Dorsolateral prefrontal cortex (tissue), 120 donors: ENCODE measurements at regions of chr17 and their contacts with region 1.

Region 1: DNA sequence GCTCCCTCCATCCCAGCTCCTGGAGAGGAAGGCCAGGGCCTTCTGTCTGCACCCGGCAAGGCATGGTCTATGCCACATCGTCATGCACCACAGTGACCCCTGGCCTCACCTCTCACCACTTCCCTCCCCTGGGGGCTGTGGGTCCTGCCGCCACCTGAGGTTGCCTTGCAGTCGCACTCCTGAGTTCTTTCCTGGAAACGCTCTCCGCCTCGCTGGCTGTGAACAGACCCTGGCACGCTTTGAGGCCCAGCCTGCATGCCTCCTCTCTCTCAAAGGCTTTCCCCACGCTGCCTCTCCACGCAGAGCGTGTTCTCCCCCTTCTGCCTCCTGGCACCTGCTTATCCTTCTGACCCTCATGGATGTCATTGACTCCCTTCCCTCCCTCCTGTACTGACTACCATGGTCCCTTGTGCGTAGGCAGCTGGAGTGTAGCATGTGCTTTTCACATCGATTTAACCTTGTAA is 45.4 kb downstream of the SEC14L1 start:
- DNase-seq: peak in 3 of 10 donors; percentile 37 to 63 (median 59)
- H3K4me3 ChIP-seq: peak overlapping the region in 2 of 59 donors; percentile 1 to 10
- H3K27ac ChIP-seq: peak overlapping the region in 55 of 59 donors; percentile 1 to 83 (median 71)
- H3K27me3 ChIP-seq: no peaks in the 10 kb centered on the region
- CTCF ChIP-seq: no peak

Region 2: DNA sequence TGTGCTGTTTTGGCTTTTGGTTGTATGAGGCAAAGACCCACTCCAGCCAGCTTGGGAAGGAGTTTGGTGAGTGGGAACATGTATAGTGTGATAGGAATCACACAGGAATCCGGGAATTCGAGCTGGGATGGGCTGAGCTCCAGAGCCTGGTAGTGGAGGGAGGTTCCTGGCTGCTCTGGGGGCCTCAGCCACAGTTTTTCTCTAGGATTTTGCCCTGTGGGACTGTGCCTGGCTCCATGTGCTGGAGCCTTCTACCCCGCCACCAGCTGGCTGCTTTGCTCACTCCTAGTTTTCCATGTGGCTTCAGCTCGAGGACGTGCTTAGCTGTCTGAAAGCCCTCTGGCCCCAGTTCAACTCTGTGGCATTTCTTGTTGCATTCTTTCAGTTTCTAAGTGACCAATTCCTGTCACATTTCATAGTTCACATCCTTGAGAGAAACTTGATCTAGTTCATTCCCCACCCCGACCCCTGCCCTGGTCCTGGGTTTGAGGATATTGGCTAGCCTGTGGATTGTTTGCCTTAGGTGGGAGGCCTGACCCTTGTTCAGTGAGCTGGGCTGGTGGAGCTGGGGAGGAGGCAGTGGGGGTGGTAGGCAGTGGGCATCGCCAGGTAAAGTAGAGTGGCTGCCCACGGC is 40.4 kb before region 1 on chr17:
- intact Hi-C with region 1: loop called (anchors 5 kb)
- DNase-seq: peak; percentile 43 to 78 (median 68)
- H3K4me3 ChIP-seq: peak overlapping the region in 57 of 59 donors; percentile 2 to 96 (median 80)
- H3K27ac ChIP-seq: peak overlapping the region; percentile 12 to 99 (median 94)
- H3K27me3 ChIP-seq: no peaks in the 10 kb centered on the region
- CTCF ChIP-seq: peak in 47 of 56 donors; percentile 12 to 57 (median 33)

Region 3: DNA sequence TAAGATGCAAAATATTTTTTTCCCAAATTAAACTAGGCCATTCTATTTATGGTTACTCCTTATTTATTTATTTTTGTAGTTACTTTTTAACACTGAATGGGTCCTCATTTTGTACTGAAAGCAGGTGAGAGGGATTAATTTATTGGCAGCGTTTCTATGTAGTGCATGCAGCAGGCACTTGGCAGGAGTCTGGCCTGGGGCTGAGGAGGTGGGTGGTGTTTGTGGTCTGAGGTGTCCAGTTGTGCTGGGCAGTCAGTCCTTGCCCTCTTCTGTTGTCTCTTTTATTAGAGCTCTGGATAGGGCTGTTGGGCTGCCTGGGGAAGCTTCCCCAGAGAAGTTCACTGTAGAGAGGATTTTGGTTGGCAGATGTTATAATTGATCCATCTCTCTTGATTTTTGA is 32.7 kb before region 1 on chr17:
- intact Hi-C with region 1: loop called (anchors 5 kb)
- DNase-seq: no peak
- H3K4me3 ChIP-seq: peak overlapping the region in 19 of 59 donors; percentile 2 to 27 (median 9)
- H3K27ac ChIP-seq: peak overlapping the region; percentile 13 to 99 (median 91)
- H3K27me3 ChIP-seq: no peaks in the 10 kb centered on the region
- CTCF ChIP-seq: no peak